Esophagus squamous epithelium (tissue), 5 donors: ENCODE measurements at regions of chr5 and their contacts with region 1.

Region 1: GRCh38 chr5:149141224-149141956 is at the start of gene ABLIM3:
- DNase-seq: no peak
- H3K4me3 ChIP-seq: peak within 1 kb of the TSS; percentile 46 to 81 (median 75)
- H3K27ac ChIP-seq: peak within 1 kb of the TSS; percentile 77 to 89 (median 88)
- H3K4me1 ChIP-seq: peaks cover 0 to 51% (median 6%) of the 10 kb centered on the region in 3 donors
- H3K27me3 ChIP-seq: peaks cover 0 to 5% (median 0%) of the 10 kb centered on the region in 4 donors
- CTCF ChIP-seq: peak; percentile 70 to 95 (median 86)
- POLR2A ChIP-seq: no peak
- total RNA-seq, gene ABLIM3: 10.6 to 47.7 (median 27.1) TPM

Region 2: DNA sequence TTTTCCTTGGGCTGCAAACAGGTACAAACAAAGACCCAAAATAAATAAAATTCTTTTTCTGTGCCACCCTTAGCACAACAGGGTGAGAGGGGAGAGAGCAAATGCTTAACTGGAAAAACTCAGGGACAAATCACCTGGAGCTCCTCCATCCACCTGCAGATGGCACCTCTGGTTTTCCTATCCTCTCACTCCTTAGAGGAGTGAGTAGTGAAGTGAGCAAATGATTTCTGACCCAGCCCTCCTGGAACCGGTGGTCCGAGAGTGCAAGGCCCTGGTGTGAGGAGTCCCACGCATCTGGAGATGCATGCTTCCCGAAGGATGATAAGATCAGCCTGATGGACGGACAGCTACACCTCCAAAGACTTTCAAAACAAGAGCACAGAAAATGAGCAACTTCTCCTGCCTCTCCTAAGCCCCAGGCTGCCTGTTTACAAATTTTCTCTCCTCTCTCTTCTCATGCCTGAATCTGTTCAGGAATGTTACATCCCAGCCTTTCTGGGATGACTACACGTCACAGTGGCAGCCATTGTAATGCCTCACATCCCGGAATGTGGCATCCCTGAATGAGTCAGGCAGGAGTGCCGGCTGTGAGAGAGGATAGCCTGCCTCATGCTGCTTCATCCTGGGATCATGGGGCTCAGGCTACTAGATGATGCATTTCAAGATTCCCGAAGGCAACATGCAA is 228.5 kb before region 1 on chr5:
- intact Hi-C with region 1: no loop called
- DNase-seq: no peak
- H3K4me3 ChIP-seq: no peak overlapping the region
- H3K27ac ChIP-seq: peak overlapping the region; percentile 75 to 93 (median 81)
- H3K4me1 ChIP-seq: peaks cover 47 to 94% (median 60%) of the 10 kb centered on the region in 3 donors
- H3K27me3 ChIP-seq: no peaks in the 10 kb centered on the region
- CTCF ChIP-seq: peak in 5 of 6 experiments; percentile 12 to 60 (median 50)
- POLR2A ChIP-seq: no peak

Region 3: GRCh38 chr5:149228618-149229297 is 87.4 kb after region 1 on chr5:
- intact Hi-C with region 1: loop called (anchors 5 kb)
- DNase-seq: no peak
- H3K4me3 ChIP-seq: no peak overlapping the region
- H3K27ac ChIP-seq: peak overlapping the region in 3 of 4 donors; percentile 43 to 48 (median 47)
- H3K4me1 ChIP-seq: peaks cover 3 to 26% (median 7%) of the 10 kb centered on the region in 3 donors
- H3K27me3 ChIP-seq: no peaks in the 10 kb centered on the region
- CTCF ChIP-seq: peak in 5 of 6 experiments; percentile 63 to 90 (median 76)
- POLR2A ChIP-seq: no peak

Region 4: GRCh38 chr5:149268928-149269557 is 127.7 kb after region 1 on chr5:
- intact Hi-C with region 1: loop called (anchors 10 kb)
- DNase-seq: no peak
- H3K4me3 ChIP-seq: no peak overlapping the region
- H3K27ac ChIP-seq: no peak overlapping the region
- H3K4me1 ChIP-seq: peaks cover 4 to 34% (median 17%) of the 10 kb centered on the region in 3 donors
- H3K27me3 ChIP-seq: peaks cover 0 to 6% (median 0%) of the 10 kb centered on the region in 4 donors
- CTCF ChIP-seq: peak; percentile 33 to 84 (median 69)
- POLR2A ChIP-seq: no peak